ENCODE measurements at regions of chr5 and their contacts with region 1.

Region 1: GRCh38 chr5:121968910-121969607 is 7.3 kb downstream of the SRFBP1 start:
- DNase-seq: peak; percentile 61
- ATAC-seq: peak; percentile 67
- H3K4me3 ChIP-seq: no peak overlapping the region
- H3K27ac ChIP-seq: no peak overlapping the region; the same call in 1 of the 2 replicates
- H3K4me1 ChIP-seq: peaks cover 17 to 19% of the 10 kb centered on the region in 2 experiments
- H3K27me3 ChIP-seq: no peaks in the 10 kb centered on the region
- CTCF ChIP-seq: no peak
- POLR2A ChIP-seq: no peak
- RAD21 ChIP-seq: peak; percentile 22; the same call in 1 of the 2 replicates

Region 2: GRCh38 chr5:122101636-122102285 is 132.7 kb after region 1 on chr5:
- CTCF ChIA-PET with region 1: interaction called, 9 read pairs
- POLR2A ChIA-PET with region 1: no interaction called
- RAD21 ChIA-PET with region 1: no interaction called
- intact Hi-C with region 1: loop called (anchors 1 kb)
- DNase-seq: peak; percentile 26
- ATAC-seq: peak; percentile 65
- H3K4me3 ChIP-seq: no peak overlapping the region
- H3K27ac ChIP-seq: no peak overlapping the region
- H3K4me1 ChIP-seq: peaks cover 10 to 13% of the 10 kb centered on the region in 2 experiments; a peak in 3 of 4 replicates
- H3K27me3 ChIP-seq: no peaks in the 10 kb centered on the region
- CTCF ChIP-seq: peak; percentile 44 to 69 (median 57); a peak in 5 of 6 replicates
- POLR2A ChIP-seq: no peak
- RAD21 ChIP-seq: peak; percentile 72